ENCODE measurements at regions of chr3 and their contacts with region 1.

Region 1: GRCh38 chr3:25789596-25790556 is at the start of gene OXSM:
- DNase-seq: peak; percentile 93 to 96 (median 94)
- ATAC-seq: peak; percentile 99
- H3K4me3 ChIP-seq: peak within 1 kb of the TSS; percentile 30 to 48
- H3K27ac ChIP-seq: peak within 1 kb of the TSS; percentile 78 to 89 (median 83)
- H3K4me1 ChIP-seq: peaks cover 55% of the 10 kb centered on the region
- H3K27me3 ChIP-seq: no peaks in the 10 kb centered on the region
- CTCF ChIP-seq: peak in 1 of 7 experiments; percentile 8
- POLR2A ChIP-seq: peak; percentile 76 to 93 (median 92)
- total RNA-seq, gene OXSM: 5.3 to 7.0 TPM

Region 2: DNA sequence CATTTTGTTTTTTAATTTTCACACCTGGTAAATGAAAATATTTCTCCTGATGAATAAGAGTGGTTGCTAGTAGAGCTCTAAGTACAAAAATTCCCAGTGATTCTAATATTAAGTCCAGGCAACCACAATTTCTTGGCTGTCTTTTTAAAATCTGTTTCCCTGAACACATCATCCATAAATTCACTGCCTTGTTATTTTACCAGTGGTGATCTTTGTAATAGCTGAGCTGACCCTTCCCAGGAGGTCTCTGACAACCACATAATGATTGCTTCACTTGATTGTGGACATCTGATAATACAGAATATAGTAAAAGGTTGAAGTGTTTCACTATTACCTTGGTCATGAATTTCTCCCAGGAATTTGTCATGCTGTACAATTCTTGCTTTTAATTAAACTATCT is 111.3 kb before region 1 on chr3:
- intact Hi-C with region 1: loop called (anchors 10 kb)
- DNase-seq: no peak
- ATAC-seq: no peak
- H3K4me3 ChIP-seq: no peak overlapping the region
- H3K27ac ChIP-seq: no peak overlapping the region
- H3K4me1 ChIP-seq: peaks cover 3% of the 10 kb centered on the region
- H3K27me3 ChIP-seq: no peaks in the 10 kb centered on the region
- CTCF ChIP-seq: no peak
- POLR2A ChIP-seq: no peak

Measured in body of pancreas (tissue), 4 donors.